ENCODE measurements at regions of chr4 and their contacts with region 1.

Region 1: DNA sequence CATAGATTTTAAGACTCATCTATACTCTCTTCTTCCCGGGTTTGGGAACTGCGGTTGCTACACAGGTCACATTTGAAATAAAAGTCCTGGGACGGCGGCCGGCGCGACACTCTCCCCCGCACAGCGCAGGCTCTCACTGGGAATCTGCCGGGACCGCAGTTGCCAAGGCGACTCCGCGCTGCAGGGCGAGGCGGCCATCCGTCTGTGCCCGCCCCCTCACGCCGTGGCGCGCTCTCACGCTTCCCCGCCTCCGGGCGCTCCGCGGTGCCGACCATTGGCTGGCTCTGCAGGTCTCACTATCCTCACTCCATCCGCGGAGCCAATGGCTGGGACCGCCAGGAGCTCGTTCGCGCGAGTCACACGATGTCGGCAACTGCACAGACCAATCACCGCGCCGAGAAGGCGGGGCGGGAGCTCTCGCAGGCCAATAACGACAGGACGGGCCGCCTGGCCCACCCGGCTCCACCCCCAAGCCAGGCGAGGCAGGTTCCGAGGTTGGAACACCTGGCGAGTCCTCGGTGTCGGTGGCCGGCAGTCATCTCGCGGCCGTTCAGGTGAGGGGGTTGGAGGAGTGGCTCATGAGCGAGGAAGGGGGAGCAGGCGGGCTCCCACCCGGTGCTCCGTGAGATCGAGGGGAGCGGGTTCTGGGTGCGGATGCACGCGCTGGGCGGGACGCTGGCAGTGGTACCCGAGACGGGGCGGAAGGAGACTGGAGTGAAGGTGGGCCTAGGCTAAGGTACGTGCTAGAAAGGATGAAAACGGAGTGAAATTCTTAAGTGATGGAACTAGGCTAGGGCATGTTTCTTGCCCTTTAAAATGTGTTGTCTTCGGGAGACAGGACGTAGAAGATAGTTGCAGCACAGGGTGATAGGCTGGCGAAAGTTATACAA is at the start of gene MSMO1:
- DNase-seq: peak; percentile 100
- ATAC-seq: peak; percentile 100
- H3K4me3 ChIP-seq: peak within 1 kb of the TSS; percentile 76 to 85
- H3K27ac ChIP-seq: no peak within 1 kb of the TSS
- H3K4me1 ChIP-seq: peaks cover 0 to 2% of the 10 kb centered on the region in 2 donors
- H3K27me3 ChIP-seq: no peaks in the 10 kb centered on the region
- total RNA-seq, gene MSMO1: 23.4 to 34.1 TPM

Region 2: GRCh38 chr4:165112368-165113139 is 214.9 kb before region 1 on chr4 and contains the start of gene TMEM192:
- intact Hi-C with region 1: loop called in 1 of 2 experiments (anchors 2 kb)
- DNase-seq: peak; percentile 95 to 98
- ATAC-seq: peak; percentile 100
- H3K4me3 ChIP-seq: peak within 1 kb of the TSS; percentile 74 to 94
- H3K27ac ChIP-seq: peak within 1 kb of the TSS; percentile 57 to 88
- H3K4me1 ChIP-seq: no peaks in the 10 kb centered on the region
- H3K27me3 ChIP-seq: no peaks in the 10 kb centered on the region
- total RNA-seq, gene TMEM192: 14.2 to 16.0 TPM

Region 3: DNA sequence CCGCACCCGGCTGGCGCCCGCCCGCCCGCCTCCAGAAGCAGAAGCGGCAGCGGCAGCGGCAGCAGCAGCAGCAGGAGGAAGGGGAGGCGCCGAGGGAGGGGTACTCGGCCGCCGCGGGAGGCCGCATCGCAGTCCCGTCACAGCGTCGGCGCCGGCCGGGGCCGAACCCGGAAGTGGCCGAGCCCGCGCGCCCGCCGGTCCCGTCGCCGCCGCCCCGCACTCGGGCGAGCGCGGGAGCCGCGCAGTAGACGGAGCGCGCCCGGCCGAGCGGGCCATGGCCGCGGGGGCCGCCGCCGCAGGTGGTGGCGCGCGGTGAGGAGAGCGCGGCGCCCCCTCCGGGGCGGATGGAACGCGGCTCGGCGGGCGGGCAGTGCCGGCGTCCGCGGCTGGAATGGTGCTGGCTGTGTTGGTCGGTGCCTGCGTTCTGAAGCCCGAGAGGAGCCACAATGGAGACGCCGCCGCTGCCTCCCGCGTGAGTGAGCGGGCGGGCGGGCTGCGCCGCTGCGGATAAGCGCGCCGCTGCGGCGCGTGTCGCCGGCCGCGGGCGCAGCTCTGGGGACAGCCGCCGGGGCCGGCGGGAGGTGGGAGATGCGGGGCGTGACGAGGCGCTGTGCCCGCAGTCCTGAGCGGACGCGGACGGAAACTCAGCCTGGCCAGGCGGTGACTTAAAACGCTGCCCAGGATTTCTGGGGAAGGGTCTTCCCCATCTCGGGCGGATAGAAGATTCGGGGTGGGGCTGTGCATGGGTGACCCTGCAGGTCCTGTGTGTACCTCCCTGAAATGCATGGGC is 119.8 kb before region 1 on chr4 and contains the start of gene KLHL2:
- intact Hi-C with region 1: loop called (anchors 2 to 10 kb)
- DNase-seq: peak; percentile 91 to 93
- ATAC-seq: peak; percentile 95
- H3K4me3 ChIP-seq: peak within 1 kb of the TSS; percentile 88 to 97
- H3K27ac ChIP-seq: peak within 1 kb of the TSS; percentile 52 to 88
- H3K4me1 ChIP-seq: no peaks in the 10 kb centered on the region
- H3K27me3 ChIP-seq: no peaks in the 10 kb centered on the region
- total RNA-seq, gene KLHL2: 28.2 to 29.8 TPM

Measured in aorta (tissue), 5 donors.